ENCODE measurements at regions of chr10 and their contacts with region 1.

Region 1: GRCh38 chr10:37495415-37495814 is 362.0 kb downstream of the ZNF248 start:
- DNase-seq: no peak
- H3K4me3 Mint-ChIP-seq: no peak overlapping the region
- H3K27ac Mint-ChIP-seq: no peak overlapping the region
- H3K4me1 Mint-ChIP-seq: no peaks in the 10 kb centered on the region
- H3K27me3 Mint-ChIP-seq: no peaks in the 10 kb centered on the region
- CTCF ChIP-seq: no peak

Region 2: DNA sequence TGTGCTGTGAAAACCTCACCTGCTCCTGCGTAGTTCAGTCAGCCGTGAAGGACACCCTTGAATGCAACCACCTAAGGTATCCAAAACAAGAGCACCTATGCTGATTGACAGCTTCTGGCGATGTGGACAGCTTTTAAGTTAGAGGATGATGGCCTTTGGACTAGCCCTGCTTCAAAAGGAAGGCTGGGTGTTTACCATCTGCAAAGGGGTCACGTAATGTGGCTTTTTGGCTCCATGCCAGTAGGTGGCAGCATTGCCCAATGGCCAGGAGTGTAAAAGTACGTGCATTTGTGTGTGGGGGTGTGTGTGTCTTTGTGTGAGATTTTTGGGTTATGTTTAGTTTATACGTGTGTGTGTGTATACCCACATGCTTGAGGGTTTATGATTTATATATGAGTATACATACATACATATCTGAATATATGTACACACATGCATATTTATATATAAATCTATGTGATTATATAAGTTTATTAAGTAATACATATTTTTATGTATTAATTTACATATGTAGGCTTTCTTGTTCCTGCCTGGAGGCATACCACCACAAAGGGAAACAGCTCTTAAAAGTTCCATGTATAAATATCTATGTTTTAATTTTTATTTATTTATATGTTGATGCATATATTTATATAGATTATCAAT is 606.4 kb before region 1 on chr10:
- CTCF ChIA-PET with region 1: no interaction called
- intact Hi-C with region 1: loop called (anchors 5 kb)
- DNase-seq: peak; percentile 60
- H3K4me3 Mint-ChIP-seq: no peak overlapping the region
- H3K27ac Mint-ChIP-seq: no peak overlapping the region
- H3K4me1 Mint-ChIP-seq: no peaks in the 10 kb centered on the region
- H3K27me3 Mint-ChIP-seq: no peaks in the 10 kb centered on the region
- CTCF ChIP-seq: peak; percentile 21

Region 3: DNA sequence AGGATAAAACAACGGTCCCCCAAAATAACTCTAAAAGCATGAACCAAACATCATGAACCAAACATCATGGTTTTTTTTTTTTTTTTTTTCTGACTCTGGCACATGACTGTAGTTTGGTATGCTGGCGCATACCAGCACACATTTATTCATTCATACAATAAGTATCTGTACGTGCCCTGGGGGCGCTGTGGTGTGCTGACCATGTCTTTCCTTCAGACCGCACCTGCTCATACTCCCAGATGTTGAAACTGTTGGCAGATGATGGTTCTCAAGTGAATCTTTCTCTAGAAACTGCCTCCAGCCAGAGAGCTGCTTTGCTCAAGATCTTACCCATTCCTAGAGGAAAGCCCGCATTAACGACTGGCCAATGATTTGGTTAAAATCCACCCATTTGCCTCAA is 484.7 kb before region 1 on chr10:
- CTCF ChIA-PET with region 1: no interaction called
- intact Hi-C with region 1: no loop called
- DNase-seq: no peak
- H3K4me3 Mint-ChIP-seq: no peak overlapping the region
- H3K27ac Mint-ChIP-seq: no peak overlapping the region
- H3K4me1 Mint-ChIP-seq: no peaks in the 10 kb centered on the region
- H3K27me3 Mint-ChIP-seq: no peaks in the 10 kb centered on the region
- CTCF ChIP-seq: no peak

Region 4: DNA sequence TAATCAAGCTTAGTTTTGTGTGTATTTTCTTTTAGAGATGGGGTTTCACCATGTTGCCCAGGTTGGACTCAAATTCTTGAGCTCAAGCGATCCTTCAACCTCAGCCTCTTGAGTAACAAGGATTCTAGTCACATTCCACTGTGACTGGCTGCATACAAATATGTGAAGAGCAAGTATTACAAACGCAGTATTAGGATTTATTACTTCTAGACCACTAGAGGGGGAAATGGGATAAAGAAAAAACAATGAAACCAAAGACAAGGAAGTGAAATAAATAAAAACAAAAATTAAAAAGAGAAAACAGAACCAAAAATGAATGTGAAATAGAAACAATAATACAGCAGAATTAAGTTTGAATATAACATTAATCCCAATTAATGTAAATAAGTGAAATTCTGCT is 61.3 kb before region 1 on chr10:
- CTCF ChIA-PET with region 1: no interaction called
- intact Hi-C with region 1: loop called (anchors 2 kb)
- DNase-seq: no peak
- H3K4me3 Mint-ChIP-seq: no peak overlapping the region
- H3K27ac Mint-ChIP-seq: no peak overlapping the region
- H3K4me1 Mint-ChIP-seq: no peaks in the 10 kb centered on the region
- H3K27me3 Mint-ChIP-seq: no peaks in the 10 kb centered on the region
- CTCF ChIP-seq: no peak

Measured in Calu3 (cell line).